Vagina (tissue), 2 donors: ENCODE measurements at regions of chr7 and their contacts with region 1.

Region 1: DNA sequence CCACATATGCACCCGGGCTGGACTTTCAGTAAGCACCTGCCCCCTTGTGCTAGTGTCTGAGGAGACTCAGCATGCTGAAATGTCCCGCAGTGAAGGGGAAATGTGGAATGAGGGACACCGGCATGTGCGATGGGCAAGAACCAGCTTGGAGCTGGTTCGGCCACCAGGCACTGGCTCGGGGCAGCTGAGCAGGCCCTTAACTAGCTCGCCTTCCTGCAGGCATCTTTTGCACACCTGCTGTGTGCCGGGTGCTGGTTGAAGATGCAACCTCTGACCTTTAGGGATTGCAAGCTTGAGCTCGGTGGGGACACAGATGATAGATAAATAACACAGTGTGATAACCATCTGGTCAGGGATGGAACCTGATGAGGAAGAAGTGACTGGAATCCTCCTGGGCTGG is 49.9 kb upstream of the TNS3 start:
- DNase-seq: no peak
- H3K4me3 ChIP-seq: no peak overlapping the region
- H3K27ac ChIP-seq: no peak overlapping the region
- H3K4me1 ChIP-seq: peaks cover 19% of the 10 kb centered on the region
- H3K27me3 ChIP-seq: no peaks in the 10 kb centered on the region
- CTCF ChIP-seq: no peak
- POLR2A ChIP-seq: no peak

Region 2: GRCh38 chr7:47757921-47758411 is 126.2 kb after region 1 on chr7:
- intact Hi-C with region 1: loop called (anchors 1 kb)
- DNase-seq: no peak
- H3K4me3 ChIP-seq: no peak overlapping the region
- H3K27ac ChIP-seq: peak overlapping the region; percentile 83
- H3K4me1 ChIP-seq: peaks cover 24% of the 10 kb centered on the region
- H3K27me3 ChIP-seq: no peaks in the 10 kb centered on the region
- CTCF ChIP-seq: no peak
- POLR2A ChIP-seq: no peak